ENCODE measurements at regions of chr17 and their contacts with region 1.

Region 1: GRCh38 chr17:12230481-12231354 is 210.0 kb downstream of the MAP2K4 start:
- DNase-seq: no peak
- H3K4me3 ChIP-seq: no peak overlapping the region
- H3K27ac ChIP-seq: peak overlapping the region; percentile 64 to 75 (median 72)
- H3K4me1 ChIP-seq: peaks cover 0 to 50% (median 42%) of the 10 kb centered on the region in 4 donors
- H3K27me3 ChIP-seq: no peaks in the 10 kb centered on the region
- CTCF ChIP-seq: no peak
- EP300 ChIP-seq: peak in 2 of 4 donors; percentile 22 to 84
- POLR2A ChIP-seq: no peak

Region 2: DNA sequence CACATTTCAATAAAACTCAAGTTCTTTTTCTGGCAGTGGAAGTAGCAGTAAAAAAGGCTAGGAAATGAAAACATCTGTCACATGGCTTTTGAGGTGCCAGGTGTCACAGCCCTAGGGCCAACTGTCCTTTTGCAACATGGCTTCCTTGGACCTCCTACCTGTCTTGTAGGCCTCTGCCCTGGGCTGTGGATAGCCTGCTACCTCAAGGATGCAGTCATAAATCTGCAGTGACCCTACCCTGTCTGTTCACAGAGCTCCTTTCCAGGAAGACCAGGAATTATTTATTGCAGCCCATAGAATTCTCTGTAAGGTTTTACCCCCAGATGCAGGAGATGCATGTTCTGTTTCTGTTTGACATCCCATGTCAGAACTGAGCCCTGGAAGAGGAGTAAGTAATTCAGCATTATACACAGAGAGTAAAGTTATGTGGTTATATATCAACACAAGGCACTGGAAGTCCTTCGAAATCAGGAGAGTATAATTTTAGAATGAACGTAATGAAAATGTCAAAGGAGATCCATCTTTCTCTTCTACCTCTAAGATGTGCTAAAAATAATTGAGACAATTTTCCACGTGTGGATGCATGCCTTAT is 37.5 kb before region 1 on chr17:
- intact Hi-C with region 1: loop called (anchors 2 kb)
- DNase-seq: no peak
- H3K4me3 ChIP-seq: no peak overlapping the region
- H3K27ac ChIP-seq: peak overlapping the region in 3 of 4 donors; percentile 59 to 72 (median 60)
- H3K4me1 ChIP-seq: peaks cover 0 to 20% (median 15%) of the 10 kb centered on the region in 4 donors
- H3K27me3 ChIP-seq: no peaks in the 10 kb centered on the region
- CTCF ChIP-seq: no peak
- EP300 ChIP-seq: peak; percentile 10 to 48 (median 35)
- POLR2A ChIP-seq: no peak

Region 3: GRCh38 chr17:12201294-12201880 is 29.3 kb before region 1 on chr17:
- intact Hi-C with region 1: loop called (anchors 2 kb)
- DNase-seq: peak; percentile 78
- H3K4me3 ChIP-seq: no peak overlapping the region
- H3K27ac ChIP-seq: peak overlapping the region in 3 of 4 donors; percentile 48 to 75 (median 71)
- H3K4me1 ChIP-seq: peaks cover 0 to 30% (median 21%) of the 10 kb centered on the region in 4 donors
- H3K27me3 ChIP-seq: no peaks in the 10 kb centered on the region
- CTCF ChIP-seq: no peak
- EP300 ChIP-seq: peak in 3 of 4 donors; percentile 26 to 58 (median 54)
- POLR2A ChIP-seq: no peak

Measured in sigmoid colon (tissue), 7 donors.